ENCODE measurements at regions of chrX and their contacts with region 1.

Region 1: GRCh38 chrX:81121513-81122382 is 80.0 kb downstream of the HMGN5 start:
- DNase-seq: peak; percentile 86 to 89 (median 87)
- ATAC-seq: peak; percentile 97
- H3K4me3 ChIP-seq: peak overlapping the region; percentile 46
- H3K27ac ChIP-seq: peak overlapping the region; percentile 73
- H3K4me1 ChIP-seq: no peaks in the 10 kb centered on the region
- H3K27me3 ChIP-seq: no peaks in the 10 kb centered on the region
- CTCF ChIP-seq: no peak
- EP300 ChIP-seq: no peak
- POLR2A ChIP-seq: peak; percentile 69
- RAD21 ChIP-seq: no peak

Region 2: DNA sequence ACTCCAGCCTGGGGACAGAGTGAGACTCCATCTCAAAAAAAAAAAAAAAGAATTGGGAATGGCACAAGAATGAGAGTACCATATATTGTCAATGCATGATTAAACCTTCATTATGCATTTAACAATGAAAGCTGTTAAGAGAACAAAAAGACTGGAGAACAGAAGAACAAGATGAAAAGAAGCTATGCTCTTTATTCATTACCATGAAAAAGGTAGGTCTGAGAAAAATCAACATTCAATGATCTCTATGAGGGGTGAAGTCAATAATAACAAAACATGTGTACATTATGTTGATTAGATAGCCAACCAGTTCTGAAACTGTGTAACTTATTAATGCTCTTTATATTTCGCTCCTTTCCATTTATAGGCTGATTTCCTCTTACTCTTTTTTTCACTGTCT is 413.0 kb before region 1 on chrX:
- CTCF ChIA-PET with region 1: no interaction called
- POLR2A ChIA-PET with region 1: no interaction called
- in situ Hi-C with region 1: no loop called
- intact Hi-C with region 1: no loop called
- DNase-seq: no peak
- ATAC-seq: no peak
- H3K4me3 ChIP-seq: no peak overlapping the region
- H3K27ac ChIP-seq: no peak overlapping the region
- H3K4me1 ChIP-seq: no peaks in the 10 kb centered on the region
- H3K27me3 ChIP-seq: no peaks in the 10 kb centered on the region
- CTCF ChIP-seq: no peak
- EP300 ChIP-seq: no peak
- POLR2A ChIP-seq: no peak
- RAD21 ChIP-seq: no peak

Region 3: GRCh38 chrX:80808160-80808735 is 313.5 kb before region 1 on chrX:
- CTCF ChIA-PET with region 1: no interaction called
- POLR2A ChIA-PET with region 1: no interaction called
- in situ Hi-C with region 1: no loop called
- intact Hi-C with region 1: loop called (anchors 5 kb)
- DNase-seq: peak; percentile 71 to 88 (median 78)
- ATAC-seq: peak; percentile 76
- H3K4me3 ChIP-seq: peak overlapping the region; percentile 54
- H3K27ac ChIP-seq: peak overlapping the region; percentile 69; the same call in 2 of the 3 replicates
- H3K4me1 ChIP-seq: no peaks in the 10 kb centered on the region
- H3K27me3 ChIP-seq: no peaks in the 10 kb centered on the region
- CTCF ChIP-seq: no peak
- EP300 ChIP-seq: no peak
- POLR2A ChIP-seq: no peak
- RAD21 ChIP-seq: no peak

Region 4: GRCh38 chrX:81201671-81202455 is 80.1 kb after region 1 on chrX and contains the starts of genes HMGN5 and SH3BGRL:
- CTCF ChIA-PET with region 1: no interaction called
- POLR2A ChIA-PET with region 1: no interaction called
- in situ Hi-C with region 1: no loop called
- intact Hi-C with region 1: loop called (anchors 5 kb)
- DNase-seq: peak; percentile 54 to 75 (median 54)
- ATAC-seq: peak; percentile 97
- H3K4me3 ChIP-seq: peak within 1 kb of the TSS; percentile 49
- H3K27ac ChIP-seq: peak within 1 kb of the TSS; percentile 79
- H3K4me1 ChIP-seq: 0 out of 5 replicates have a peak, but pooled peaks cover 0 to 3% of the 10 kb centered on the region in 2 experiments
- H3K27me3 ChIP-seq: no peaks in the 10 kb centered on the region
- CTCF ChIP-seq: no peak
- EP300 ChIP-seq: peak; percentile 7; the same call in 1 of the 2 replicates
- POLR2A ChIP-seq: peak; percentile 57
- RAD21 ChIP-seq: no peak
- polyA plus RNA-seq, gene HMGN5: 7.0 to 16.0 TPM
- polyA plus RNA-seq, gene SH3BGRL: 45.4 to 67.4 TPM

Region 5: DNA sequence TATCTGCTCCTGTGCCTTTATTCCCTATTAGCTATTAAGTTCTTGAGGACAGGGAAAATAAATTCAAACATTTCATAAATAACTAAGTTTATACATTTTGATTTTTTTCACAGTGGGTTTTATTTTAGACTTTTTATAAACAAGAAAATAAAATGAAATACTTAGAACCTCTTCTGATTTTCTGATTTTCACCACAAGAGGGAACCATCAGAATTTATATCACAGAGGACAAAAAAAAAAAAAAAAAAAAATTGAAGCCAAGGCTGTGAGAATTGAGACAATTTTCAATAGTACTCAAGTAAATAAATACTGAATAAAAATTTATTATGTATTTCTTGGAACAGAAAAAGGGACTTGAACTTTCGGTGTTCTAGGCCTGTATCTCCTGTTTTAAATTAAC is 368.2 kb after region 1 on chrX:
- CTCF ChIA-PET with region 1: no interaction called
- POLR2A ChIA-PET with region 1: no interaction called
- in situ Hi-C with region 1: no loop called
- intact Hi-C with region 1: no loop called
- DNase-seq: peak in 1 of 4 experiments; percentile 3
- ATAC-seq: no peak
- H3K4me3 ChIP-seq: no peak overlapping the region
- H3K27ac ChIP-seq: no peak overlapping the region
- H3K4me1 ChIP-seq: no peaks in the 10 kb centered on the region
- H3K27me3 ChIP-seq: no peaks in the 10 kb centered on the region
- CTCF ChIP-seq: no peak
- EP300 ChIP-seq: no peak
- POLR2A ChIP-seq: no peak
- RAD21 ChIP-seq: no peak

Measured in K562 (cell line).